WTC11 (cell line): ENCODE measurements at regions of chr6 and their contacts with region 1.

Region 1: DNA sequence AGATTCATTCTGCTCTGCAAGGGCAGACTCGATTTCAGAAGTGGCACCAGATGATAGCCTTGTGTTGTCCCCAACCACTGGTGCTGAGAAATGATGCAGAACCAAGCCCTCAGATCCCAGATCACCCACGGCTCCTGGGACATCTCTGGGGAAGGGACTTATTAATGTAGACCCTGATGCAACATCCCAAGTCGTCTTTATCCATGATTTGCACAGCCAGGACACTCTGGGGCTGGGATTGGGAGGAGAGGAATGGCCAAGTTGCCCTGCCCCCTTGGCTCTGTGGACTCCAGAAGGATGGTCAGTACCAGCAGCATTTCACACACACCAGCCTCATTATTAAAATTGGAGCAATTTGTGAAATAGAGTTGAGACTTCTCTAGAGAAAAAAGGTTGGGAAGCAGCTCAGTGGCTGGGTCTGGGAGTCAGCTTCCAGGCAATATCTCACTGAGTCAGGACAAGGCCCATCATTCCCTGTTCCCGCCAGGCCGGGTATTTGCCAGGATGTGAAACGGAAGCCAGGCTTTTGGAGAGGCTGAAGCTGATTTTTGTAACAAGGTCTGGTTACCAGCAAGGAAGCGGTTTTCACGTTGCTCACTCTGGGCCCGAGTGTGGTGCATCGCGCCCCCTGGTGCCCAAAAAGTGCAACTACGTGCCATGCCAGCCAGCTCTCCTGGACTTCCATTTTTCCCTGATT is 67.4 kb downstream of the ZBTB2 start:
- DNase-seq: peak; percentile 90
- ATAC-seq: peak; percentile 88
- H3K4me3 Mint-ChIP-seq: peak overlapping the region; percentile 76
- H3K27ac Mint-ChIP-seq: peak overlapping the region; percentile 47; the same call in 1 of the 2 replicates
- H3K4me1 Mint-ChIP-seq: peaks cover 24% of the 10 kb centered on the region
- H3K27me3 Mint-ChIP-seq: peaks cover 12% of the 10 kb centered on the region; the same call in 1 of the 2 replicates
- CTCF ChIP-seq: peak; percentile 97

Region 2: DNA sequence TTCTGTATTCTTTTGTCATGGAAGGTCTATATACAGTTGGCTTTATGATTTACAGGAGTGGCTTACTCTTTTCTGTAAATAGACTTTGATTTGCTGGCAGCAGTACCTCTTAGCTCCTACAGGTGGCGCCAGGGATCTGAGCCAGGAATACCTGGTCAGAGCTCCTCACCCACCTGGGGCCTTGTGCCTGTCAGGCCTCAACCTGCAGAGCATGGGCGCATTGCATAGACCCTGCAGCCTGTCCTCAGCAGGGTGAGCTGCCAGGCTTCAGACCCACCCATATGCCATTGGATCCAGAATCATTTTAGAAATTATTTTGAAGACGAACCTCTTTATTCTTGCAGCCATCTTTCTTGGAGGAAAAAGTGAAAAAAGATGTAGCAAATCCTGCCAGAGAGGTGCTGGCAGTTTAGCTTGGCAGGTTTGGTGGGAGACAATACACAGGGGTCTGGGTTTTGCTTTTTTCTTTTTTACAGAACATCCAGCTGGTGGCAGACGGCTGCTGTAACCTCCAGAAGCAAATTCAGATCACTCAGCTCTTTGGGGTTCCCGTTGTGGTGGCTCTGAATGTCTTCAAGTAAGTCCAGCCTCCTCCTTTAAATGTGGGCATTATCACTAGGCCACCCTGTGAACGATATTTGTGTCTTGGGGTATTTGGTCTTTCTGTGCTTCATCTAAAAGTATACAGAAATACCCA is 309.4 kb before region 1 on chr6:
- CTCF ChIA-PET with region 1: interaction called, 93 read pairs
- POLR2A ChIA-PET with region 1: no interaction called
- DNase-seq: peak; percentile 77
- ATAC-seq: peak; percentile 85
- H3K4me3 Mint-ChIP-seq: no peak overlapping the region
- H3K27ac Mint-ChIP-seq: peak overlapping the region; percentile 79
- H3K4me1 Mint-ChIP-seq: peaks cover 12% of the 10 kb centered on the region
- H3K27me3 Mint-ChIP-seq: no peaks in the 10 kb centered on the region
- CTCF ChIP-seq: peak; percentile 96

Region 3: GRCh38 chr6:151205721-151206600 is 118.0 kb before region 1 on chr6:
- CTCF ChIA-PET with region 1: interaction called, 12 read pairs
- POLR2A ChIA-PET with region 1: no interaction called
- DNase-seq: no peak
- ATAC-seq: no peak
- H3K4me3 Mint-ChIP-seq: no peak overlapping the region
- H3K27ac Mint-ChIP-seq: no peak overlapping the region
- H3K4me1 Mint-ChIP-seq: no peaks in the 10 kb centered on the region
- H3K27me3 Mint-ChIP-seq: no peaks in the 10 kb centered on the region; the same call in 1 of the 2 replicates
- CTCF ChIP-seq: no peak

Region 4: DNA sequence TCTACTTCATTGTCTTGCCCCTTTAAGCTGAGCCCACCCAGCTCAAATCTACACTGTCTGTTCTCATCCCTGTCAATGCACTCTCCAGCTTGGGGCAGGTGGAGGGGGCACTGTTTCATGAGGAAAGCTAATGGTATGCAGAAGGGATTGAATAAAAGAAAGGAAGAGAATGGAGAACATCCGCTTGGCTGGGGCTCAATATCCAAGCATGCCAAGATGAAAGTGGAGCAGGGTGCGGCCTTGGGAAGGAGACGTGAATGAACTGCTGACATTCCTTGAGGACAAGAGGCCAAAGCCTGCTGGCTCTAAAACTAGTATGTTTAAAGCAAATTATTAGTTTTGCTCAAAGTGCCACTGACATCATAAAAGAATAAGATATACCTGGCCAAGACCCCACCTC is 60.0 kb before region 1 on chr6:
- CTCF ChIA-PET with region 1: interaction called, 12 read pairs
- POLR2A ChIA-PET with region 1: no interaction called
- DNase-seq: no peak
- ATAC-seq: peak; percentile 71
- H3K4me3 Mint-ChIP-seq: no peak overlapping the region
- H3K27ac Mint-ChIP-seq: peak overlapping the region; percentile 70; the same call in 1 of the 2 replicates
- H3K4me1 Mint-ChIP-seq: peaks cover 12% of the 10 kb centered on the region
- H3K27me3 Mint-ChIP-seq: no peaks in the 10 kb centered on the region
- CTCF ChIP-seq: no peak

Region 5: DNA sequence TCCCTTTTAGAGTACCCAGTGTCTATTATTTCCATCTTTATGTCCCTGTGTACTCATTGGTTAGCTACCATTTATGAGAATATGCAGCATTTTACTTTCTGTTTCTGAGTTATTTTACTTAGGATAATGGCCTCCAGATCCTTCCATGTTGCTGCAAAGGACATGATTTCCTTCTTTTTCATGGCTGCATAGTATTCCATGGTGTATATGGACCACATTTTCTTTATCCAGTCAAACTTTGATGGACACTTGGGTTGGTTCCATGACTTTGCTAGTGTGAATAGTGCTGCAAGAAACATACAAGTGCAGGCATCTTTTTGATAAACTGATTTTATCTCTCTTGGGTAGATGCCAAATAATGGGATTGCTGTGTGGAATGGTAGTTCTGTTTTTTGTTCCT is 12.0 kb after region 1 on chr6:
- CTCF ChIA-PET with region 1: interaction called, 46 read pairs
- POLR2A ChIA-PET with region 1: no interaction called
- DNase-seq: no peak
- ATAC-seq: no peak
- H3K4me3 Mint-ChIP-seq: no peak overlapping the region
- H3K27ac Mint-ChIP-seq: no peak overlapping the region
- H3K4me1 Mint-ChIP-seq: peaks cover 8% of the 10 kb centered on the region; the same call in 1 of the 2 replicates
- H3K27me3 Mint-ChIP-seq: no peaks in the 10 kb centered on the region; the same call in 1 of the 2 replicates
- CTCF ChIP-seq: no peak